CD8-positive, alpha-beta T cell (primary cell): ENCODE measurements at regions of chr5 and their contacts with region 1.

Region 1: GRCh38 chr5:96601811-96602244 is 60.3 kb upstream of the CAST start:
- DNase-seq: peak in 8 of 9 experiments; percentile 31 to 78 (median 56)
- ATAC-seq: peak; percentile 85
- H3K4me3 ChIP-seq: no peak overlapping the region
- H3K4me3 Mint-ChIP-seq: no peak overlapping the region
- H3K27ac ChIP-seq: no peak overlapping the region
- H3K27ac Mint-ChIP-seq: no peak overlapping the region
- H3K4me1 ChIP-seq: no peaks in the 10 kb centered on the region
- H3K4me1 Mint-ChIP-seq: no peaks in the 10 kb centered on the region
- H3K27me3 ChIP-seq: no peaks in the 10 kb centered on the region
- H3K27me3 Mint-ChIP-seq: no peaks in the 10 kb centered on the region
- CTCF ChIP-seq: peak; percentile 70

Region 2: GRCh38 chr5:95773335-95774059 is 828.3 kb before region 1 on chr5:
- CTCF ChIA-PET with region 1: no interaction called
- POLR2A ChIA-PET with region 1: no interaction called
- intact Hi-C with region 1: loop called in 1 of 2 experiments (anchors 10 kb)
- DNase-seq: peak in 2 of 9 experiments; percentile 25 to 27
- ATAC-seq: no peak
- H3K4me3 ChIP-seq: no peak overlapping the region
- H3K4me3 Mint-ChIP-seq: no peak overlapping the region
- H3K27ac ChIP-seq: no peak overlapping the region
- H3K27ac Mint-ChIP-seq: no peak overlapping the region
- H3K4me1 ChIP-seq: no peaks in the 10 kb centered on the region
- H3K4me1 Mint-ChIP-seq: no peaks in the 10 kb centered on the region
- H3K27me3 ChIP-seq: no peaks in the 10 kb centered on the region
- H3K27me3 Mint-ChIP-seq: no peaks in the 10 kb centered on the region
- CTCF ChIP-seq: no peak

Region 3: DNA sequence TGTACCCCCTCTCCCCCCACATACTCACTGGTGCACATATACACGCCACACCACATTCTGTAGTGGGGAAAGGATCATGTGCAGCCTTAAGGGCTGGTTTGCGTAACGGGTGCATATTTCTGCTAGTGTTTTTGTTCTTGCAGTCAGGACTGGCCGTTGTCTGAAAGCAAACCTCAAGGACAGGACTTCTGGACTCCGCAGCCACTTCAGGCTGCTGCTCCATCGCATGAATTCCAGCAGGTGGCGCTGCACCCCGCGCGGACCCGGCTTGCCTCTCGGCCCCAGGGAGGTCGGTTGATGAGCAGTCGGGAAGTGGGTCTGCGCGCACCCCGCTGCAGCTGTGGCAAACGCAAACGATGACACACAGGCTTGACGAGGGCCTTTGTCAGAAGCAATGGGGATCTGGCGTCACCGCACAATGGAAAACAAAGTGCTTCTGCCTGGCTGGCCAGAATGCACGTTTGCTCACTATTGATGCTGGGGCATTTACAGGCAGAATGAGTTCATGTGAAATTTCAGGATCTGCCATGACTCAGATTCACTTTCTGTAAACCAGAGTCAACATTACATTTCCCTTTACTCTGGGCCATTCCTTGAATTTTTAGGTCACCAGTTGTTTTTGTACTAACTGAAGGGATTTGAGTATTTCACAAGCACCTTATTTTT is 743.0 kb before region 1 on chr5:
- CTCF ChIA-PET with region 1: interaction called, 20 read pairs
- POLR2A ChIA-PET with region 1: no interaction called
- intact Hi-C with region 1: loop called (anchors 1 kb)
- DNase-seq: peak; percentile 76 to 95 (median 92)
- ATAC-seq: peak; percentile 98
- H3K4me3 ChIP-seq: no peak overlapping the region
- H3K4me3 Mint-ChIP-seq: peak overlapping the region; percentile 47
- H3K27ac ChIP-seq: no peak overlapping the region
- H3K27ac Mint-ChIP-seq: peak overlapping the region; percentile 34
- H3K4me1 ChIP-seq: peaks cover 9% of the 10 kb centered on the region
- H3K4me1 Mint-ChIP-seq: peaks cover 25% of the 10 kb centered on the region
- H3K27me3 ChIP-seq: no peaks in the 10 kb centered on the region
- H3K27me3 Mint-ChIP-seq: peaks cover 10% of the 10 kb centered on the region
- CTCF ChIP-seq: peak; percentile 93

Region 4: GRCh38 chr5:96336351-96336985 is 265.4 kb before region 1 on chr5:
- CTCF ChIA-PET with region 1: interaction called, 125 read pairs
- POLR2A ChIA-PET with region 1: no interaction called
- intact Hi-C with region 1: no loop called
- DNase-seq: peak; percentile 19 to 81 (median 57)
- ATAC-seq: peak; percentile 97
- H3K4me3 ChIP-seq: no peak overlapping the region
- H3K4me3 Mint-ChIP-seq: no peak overlapping the region
- H3K27ac ChIP-seq: no peak overlapping the region
- H3K27ac Mint-ChIP-seq: no peak overlapping the region
- H3K4me1 ChIP-seq: no peaks in the 10 kb centered on the region
- H3K4me1 Mint-ChIP-seq: no peaks in the 10 kb centered on the region
- H3K27me3 ChIP-seq: no peaks in the 10 kb centered on the region
- H3K27me3 Mint-ChIP-seq: peaks cover 14% of the 10 kb centered on the region
- CTCF ChIP-seq: peak; percentile 92

Region 5: GRCh38 chr5:96344678-96345577 is 256.9 kb before region 1 on chr5:
- CTCF ChIA-PET with region 1: interaction called, 125 read pairs
- POLR2A ChIA-PET with region 1: interaction called, 5 read pairs
- intact Hi-C with region 1: loop called (anchors 1 kb)
- DNase-seq: peak in 3 of 9 experiments; percentile 8 to 75 (median 70)
- ATAC-seq: peak; percentile 89
- H3K4me3 ChIP-seq: no peak overlapping the region
- H3K4me3 Mint-ChIP-seq: peak overlapping the region; percentile 2
- H3K27ac ChIP-seq: no peak overlapping the region
- H3K27ac Mint-ChIP-seq: no peak overlapping the region
- H3K4me1 ChIP-seq: peaks cover 12% of the 10 kb centered on the region
- H3K4me1 Mint-ChIP-seq: peaks cover 13% of the 10 kb centered on the region
- H3K27me3 ChIP-seq: peaks cover 0 to 2% of the 10 kb centered on the region in 2 experiments
- H3K27me3 Mint-ChIP-seq: peaks cover 4% of the 10 kb centered on the region
- CTCF ChIP-seq: peak; percentile 26

Region 6: GRCh38 chr5:96381526-96381925 is 220.3 kb before region 1 on chr5:
- CTCF ChIA-PET with region 1: interaction called, 4 read pairs
- POLR2A ChIA-PET with region 1: no interaction called
- intact Hi-C with region 1: loop called in 1 of 2 experiments (anchors 1 kb)
- DNase-seq: peak in 3 of 9 experiments; percentile 3 to 25 (median 8)
- ATAC-seq: no peak
- H3K4me3 ChIP-seq: no peak overlapping the region
- H3K4me3 Mint-ChIP-seq: no peak overlapping the region
- H3K27ac ChIP-seq: no peak overlapping the region
- H3K27ac Mint-ChIP-seq: no peak overlapping the region
- H3K4me1 ChIP-seq: no peaks in the 10 kb centered on the region
- H3K4me1 Mint-ChIP-seq: peaks cover 3% of the 10 kb centered on the region
- H3K27me3 ChIP-seq: peaks cover 0 to 7% of the 10 kb centered on the region in 2 experiments
- H3K27me3 Mint-ChIP-seq: peaks cover 15% of the 10 kb centered on the region
- CTCF ChIP-seq: no peak

Region 7: DNA sequence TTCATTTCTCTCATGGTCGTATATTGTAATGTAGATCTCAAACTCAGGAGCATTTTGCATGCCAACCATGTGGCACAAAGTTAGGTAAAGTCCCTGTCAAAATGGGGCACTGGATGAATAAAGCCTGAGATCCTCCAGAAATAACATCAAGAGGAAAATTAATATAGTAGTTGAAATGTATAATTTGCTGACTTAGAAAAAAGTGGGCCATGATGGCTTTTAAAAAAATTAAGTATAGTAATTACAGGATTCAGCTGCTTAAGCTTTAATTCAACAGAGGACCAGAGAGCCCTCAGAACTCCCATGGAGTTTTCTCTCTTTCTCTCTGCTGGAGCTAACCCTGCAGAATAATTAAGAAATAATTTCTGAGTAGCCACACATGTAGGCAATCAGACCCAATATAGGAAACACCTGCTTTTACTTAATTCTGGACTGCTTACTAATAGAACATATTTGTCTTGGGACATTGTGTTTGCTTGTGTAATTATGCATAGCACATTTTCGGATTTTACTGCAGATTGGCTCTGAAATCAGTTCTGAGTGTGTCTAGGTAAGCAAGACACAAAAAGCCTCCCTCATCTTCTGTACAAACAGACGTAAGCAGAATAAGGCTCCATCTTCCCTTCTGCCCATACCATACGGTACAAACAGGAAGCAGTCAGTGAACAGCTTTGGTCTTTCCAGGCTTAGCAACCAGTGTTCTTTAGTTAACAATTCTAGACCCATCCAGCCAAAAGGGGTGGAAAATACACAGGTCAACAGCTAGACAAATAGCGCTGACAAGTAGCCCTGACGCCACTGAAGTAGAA is 142.3 kb before region 1 on chr5:
- CTCF ChIA-PET with region 1: no interaction called
- POLR2A ChIA-PET with region 1: no interaction called
- intact Hi-C with region 1: no loop called
- DNase-seq: no peak
- ATAC-seq: no peak
- H3K4me3 ChIP-seq: no peak overlapping the region
- H3K4me3 Mint-ChIP-seq: no peak overlapping the region
- H3K27ac ChIP-seq: no peak overlapping the region
- H3K27ac Mint-ChIP-seq: no peak overlapping the region
- H3K4me1 ChIP-seq: no peaks in the 10 kb centered on the region
- H3K4me1 Mint-ChIP-seq: peaks cover 4% of the 10 kb centered on the region
- H3K27me3 ChIP-seq: no peaks in the 10 kb centered on the region
- H3K27me3 Mint-ChIP-seq: peaks cover 8% of the 10 kb centered on the region
- CTCF ChIP-seq: no peak

Region 8: GRCh38 chr5:96614110-96614691 is 12.4 kb after region 1 on chr5:
- CTCF ChIA-PET with region 1: interaction called, 87 read pairs
- POLR2A ChIA-PET with region 1: interaction called, 3 read pairs
- intact Hi-C with region 1: no loop called
- DNase-seq: peak in 8 of 9 experiments; percentile 5 to 73 (median 44)
- ATAC-seq: peak; percentile 61
- H3K4me3 ChIP-seq: no peak overlapping the region
- H3K4me3 Mint-ChIP-seq: no peak overlapping the region
- H3K27ac ChIP-seq: no peak overlapping the region
- H3K27ac Mint-ChIP-seq: no peak overlapping the region
- H3K4me1 ChIP-seq: no peaks in the 10 kb centered on the region
- H3K4me1 Mint-ChIP-seq: peaks cover 4% of the 10 kb centered on the region
- H3K27me3 ChIP-seq: no peaks in the 10 kb centered on the region
- H3K27me3 Mint-ChIP-seq: peaks cover 10% of the 10 kb centered on the region
- CTCF ChIP-seq: peak; percentile 64